Activated CD8-positive, alpha-beta T cell treated with anti-CD3 and anti-CD28 coated beads for 36 hours (primary cell): ENCODE measurements at regions of chr1 and their contacts with region 1.

Region 1: DNA sequence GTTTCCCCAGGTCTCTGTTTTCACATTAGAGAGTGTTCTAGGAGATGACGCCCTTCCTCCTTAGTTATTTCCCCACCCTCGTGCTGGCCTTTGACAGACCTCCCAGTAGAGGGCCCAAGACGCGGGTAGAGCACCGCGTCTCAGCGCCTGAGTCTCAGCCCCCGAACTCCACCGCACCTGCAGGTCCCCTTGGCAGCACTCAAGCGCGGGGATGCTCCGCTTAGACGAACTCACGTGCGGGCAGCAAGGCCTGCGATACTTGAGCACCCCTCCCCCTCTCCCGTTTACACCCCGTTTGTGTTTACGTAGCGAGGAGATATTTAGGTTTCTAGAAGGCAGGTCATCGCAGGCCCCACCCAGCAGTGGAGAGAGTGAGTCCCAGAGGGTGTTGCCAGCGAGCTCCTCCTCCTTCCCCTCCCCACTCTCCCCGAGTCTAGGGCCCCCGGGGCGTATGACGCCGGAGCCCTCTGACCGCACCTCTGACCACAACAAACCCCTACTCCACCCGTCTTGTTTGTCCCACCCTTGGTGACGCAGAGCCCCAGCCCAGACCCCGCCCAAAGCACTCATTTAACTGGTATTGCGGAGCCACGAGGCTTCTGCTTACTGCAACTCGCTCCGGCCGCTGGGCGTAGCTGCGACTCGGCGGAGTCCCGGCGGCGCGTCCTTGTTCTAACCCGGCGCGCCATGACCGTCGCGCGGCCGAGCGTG is at the start of gene CD55:
- DNase-seq: peak; percentile 100
- ATAC-seq: peak; percentile 92
- H3K4me3 Mint-ChIP-seq: peak within 1 kb of the TSS; percentile 84
- H3K27ac Mint-ChIP-seq: peak within 1 kb of the TSS; percentile 97
- H3K4me1 Mint-ChIP-seq: peaks cover 32% of the 10 kb centered on the region
- H3K27me3 Mint-ChIP-seq: no peaks in the 10 kb centered on the region
- CTCF ChIP-seq: peak; percentile 17
- total RNA-seq, gene CD55: 100 to 102 TPM

Region 2: DNA sequence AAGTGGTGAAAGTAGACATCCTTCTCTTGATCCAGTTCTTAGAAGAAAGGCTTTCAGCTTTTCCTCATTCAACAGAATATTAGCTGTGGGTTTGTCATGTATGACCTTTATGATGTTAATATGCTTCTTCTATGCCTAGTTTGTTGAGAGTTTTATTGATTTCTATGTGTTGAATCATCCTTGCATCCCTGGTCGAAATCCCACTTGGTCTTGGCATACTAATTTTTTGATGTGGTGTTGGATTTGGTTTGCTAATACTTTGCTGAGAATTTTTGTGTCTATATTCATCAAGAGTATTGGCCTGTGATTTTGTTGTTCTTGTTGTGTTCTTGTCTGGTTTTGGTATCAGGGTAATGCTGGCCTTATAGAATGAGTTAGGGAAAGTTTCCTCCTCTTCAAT is 21.1 kb after region 1 on chr1:
- CTCF ChIA-PET with region 1: interaction called, 50 read pairs
- POLR2A ChIA-PET with region 1: interaction called, 15 read pairs
- intact Hi-C with region 1: loop called (anchors 2 kb)
- DNase-seq: no peak
- ATAC-seq: no peak
- H3K4me3 Mint-ChIP-seq: peak overlapping the region; percentile 1
- H3K27ac Mint-ChIP-seq: peak overlapping the region; percentile 74
- H3K4me1 Mint-ChIP-seq: peaks cover 84% of the 10 kb centered on the region
- H3K27me3 Mint-ChIP-seq: no peaks in the 10 kb centered on the region
- CTCF ChIP-seq: no peak

Region 3: GRCh38 chr1:207362962-207363858 is 42.0 kb after region 1 on chr1:
- CTCF ChIA-PET with region 1: no interaction called
- POLR2A ChIA-PET with region 1: interaction called, 11 read pairs
- intact Hi-C with region 1: loop called (anchors 5 kb)
- DNase-seq: peak; percentile 45
- ATAC-seq: peak; percentile 87
- H3K4me3 Mint-ChIP-seq: no peak overlapping the region
- H3K27ac Mint-ChIP-seq: no peak overlapping the region
- H3K4me1 Mint-ChIP-seq: peaks cover 8% of the 10 kb centered on the region
- H3K27me3 Mint-ChIP-seq: no peaks in the 10 kb centered on the region
- CTCF ChIP-seq: no peak